AG04449 (cell line): ENCODE measurements at regions of chr3 and their contacts with region 1.

Region 1: DNA sequence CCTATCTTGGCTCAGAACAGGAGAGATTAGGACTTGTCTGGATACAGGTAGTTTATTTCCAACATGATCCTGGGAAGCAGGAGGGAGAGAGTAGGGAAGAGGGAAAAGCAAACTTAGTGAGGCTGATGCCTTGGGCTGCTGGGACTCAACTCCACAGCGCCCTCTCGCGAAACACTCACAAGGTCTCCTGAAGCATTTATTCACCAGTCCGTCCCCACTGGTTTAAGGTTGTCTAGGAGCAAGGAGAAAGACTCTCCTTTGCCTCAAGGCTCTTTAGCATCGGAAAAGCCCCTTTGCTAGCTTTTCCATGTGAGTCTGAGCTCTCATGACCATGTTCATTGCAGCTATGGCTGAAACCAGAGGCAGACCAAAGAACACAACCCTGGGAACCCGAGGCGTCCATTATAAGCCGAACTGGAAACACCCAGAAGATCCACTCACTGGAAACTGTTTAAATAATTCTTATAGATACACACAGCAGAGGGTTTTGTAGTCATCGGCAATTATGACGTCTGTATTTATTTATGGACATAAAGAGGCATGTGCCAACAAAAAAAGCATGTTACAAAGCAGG is 244.5 kb downstream of the CD47 start:
- DNase-seq: no peak
- H3K4me3 ChIP-seq: no peak overlapping the region
- CTCF ChIP-seq: peak; percentile 82

Region 2: GRCh38 chr3:107718547-107718946 is 127.8 kb before region 1 on chr3:
- CTCF ChIA-PET with region 1: no interaction called
- POLR2A ChIA-PET with region 1: no interaction called
- DNase-seq: no peak
- H3K4me3 ChIP-seq: no peak overlapping the region
- CTCF ChIP-seq: no peak

Region 3: DNA sequence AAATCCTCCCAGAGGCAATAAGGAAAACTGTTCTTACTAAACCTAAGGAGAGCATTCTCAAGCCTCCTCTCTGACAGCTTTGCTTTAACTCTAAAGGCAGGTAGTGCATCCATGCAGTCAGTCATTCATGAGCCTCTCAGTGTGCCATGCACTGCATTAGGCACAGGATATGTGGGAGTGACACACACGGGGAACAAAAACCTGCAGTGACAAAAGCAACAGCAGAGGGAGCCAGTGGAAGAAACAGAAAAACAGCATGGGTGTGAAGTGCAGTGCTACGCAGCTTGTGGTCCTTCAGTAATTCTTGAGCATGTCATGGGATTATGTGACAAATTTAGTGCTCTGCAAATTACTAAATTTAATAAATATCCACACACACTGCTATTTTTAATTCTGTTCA is 92.9 kb before region 1 on chr3:
- CTCF ChIA-PET with region 1: interaction called, 16 read pairs
- POLR2A ChIA-PET with region 1: no interaction called
- DNase-seq: no peak
- H3K4me3 ChIP-seq: no peak overlapping the region
- CTCF ChIP-seq: peak; percentile 60

Region 4: DNA sequence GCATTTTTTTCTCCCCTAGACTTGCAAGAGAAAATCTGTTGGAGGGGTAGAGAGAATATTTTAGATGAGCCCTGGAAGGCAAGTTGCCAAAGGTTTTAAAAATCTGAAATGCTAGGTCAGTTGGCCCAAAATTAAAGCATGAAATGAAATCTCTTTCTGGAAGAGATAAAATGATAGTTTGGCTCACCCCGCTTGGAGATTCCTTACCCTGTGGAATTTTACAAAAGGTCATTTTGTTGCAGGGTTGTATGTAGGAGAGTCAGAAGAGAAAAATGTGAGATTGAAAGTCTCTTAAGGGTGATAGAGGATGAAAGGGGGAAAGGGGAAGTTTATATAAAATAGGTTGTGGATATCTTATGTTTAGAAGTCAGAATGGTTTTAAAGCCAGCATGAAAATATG is 33.3 kb before region 1 on chr3:
- CTCF ChIA-PET with region 1: interaction called, 11 read pairs
- POLR2A ChIA-PET with region 1: no interaction called
- DNase-seq: no peak
- H3K4me3 ChIP-seq: no peak overlapping the region
- CTCF ChIP-seq: no peak

Region 5: DNA sequence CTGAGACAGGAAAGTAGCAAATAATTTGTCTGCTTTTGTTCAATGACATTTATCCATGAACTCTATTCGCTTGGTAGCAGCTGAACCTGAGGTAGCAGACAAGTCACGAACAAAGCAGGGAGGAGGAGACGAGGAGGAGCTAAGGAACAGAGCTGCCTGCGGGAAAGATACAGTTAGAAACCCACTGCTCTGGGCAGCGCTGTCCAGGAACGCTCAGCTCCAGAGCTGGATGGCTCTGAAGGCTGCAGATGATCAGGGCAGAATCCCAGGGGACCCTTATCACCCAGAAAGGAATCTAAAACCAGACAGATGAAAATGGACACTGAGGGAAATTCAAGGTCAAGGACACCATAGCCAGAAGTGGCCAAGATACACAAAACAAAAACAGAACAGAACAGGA is 13.3 kb before region 1 on chr3:
- CTCF ChIA-PET with region 1: interaction called, 14 read pairs
- POLR2A ChIA-PET with region 1: no interaction called
- DNase-seq: no peak
- H3K4me3 ChIP-seq: no peak overlapping the region
- CTCF ChIP-seq: no peak